ENCODE measurements at regions of chr2 and their contacts with region 1.

Region 1: GRCh38 chr2:69643602-69644505 is at the start of gene AAK1:
- DNase-seq: peak; percentile 90
- H3K4me3 Mint-ChIP-seq: peak within 1 kb of the TSS; percentile 81
- H3K27ac Mint-ChIP-seq: peak within 1 kb of the TSS; percentile 98
- H3K4me1 Mint-ChIP-seq: peaks cover 47% of the 10 kb centered on the region
- H3K27me3 Mint-ChIP-seq: no peaks in the 10 kb centered on the region
- total RNA-seq, gene AAK1: 77.4 to 79.5 TPM

Region 2: DNA sequence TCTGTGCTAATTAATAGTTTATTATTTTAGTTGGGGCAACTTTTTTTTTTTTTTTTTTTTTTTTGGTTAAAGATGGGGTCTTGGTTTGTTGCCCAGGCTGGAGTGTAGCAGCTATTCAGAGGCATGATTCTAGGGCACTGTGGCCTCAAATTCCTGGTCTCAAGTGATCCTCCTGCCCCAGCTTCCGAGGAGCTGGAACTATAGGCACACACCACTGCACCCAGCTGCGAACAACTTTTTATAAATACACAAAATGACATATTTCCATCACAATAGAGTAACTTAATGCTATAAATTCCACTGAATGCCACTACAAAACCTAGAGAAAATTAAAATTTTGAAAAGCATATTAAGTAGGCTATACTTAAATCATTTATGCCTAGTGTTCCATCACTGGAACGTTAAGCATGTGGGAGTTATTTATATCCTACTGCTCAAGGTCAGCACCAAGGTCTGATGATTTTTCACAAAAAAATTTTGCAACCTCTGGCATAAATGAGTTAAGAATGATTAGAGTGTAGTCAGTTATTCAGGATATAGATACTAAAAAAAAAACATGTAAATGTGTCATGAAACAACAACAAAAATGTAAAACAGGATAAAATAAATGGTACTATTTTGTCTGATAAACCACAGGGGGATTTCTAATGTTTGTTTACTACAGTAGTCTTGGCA is 303.6 kb before region 1 on chr2:
- CTCF ChIA-PET with region 1: no interaction called
- intact Hi-C with region 1: no loop called
- DNase-seq: no peak
- H3K4me3 Mint-ChIP-seq: no peak overlapping the region
- H3K27ac Mint-ChIP-seq: no peak overlapping the region
- H3K4me1 Mint-ChIP-seq: peaks cover 9% of the 10 kb centered on the region
- H3K27me3 Mint-ChIP-seq: no peaks in the 10 kb centered on the region

Region 3: GRCh38 chr2:69386789-69387734 is 256.8 kb before region 1 on chr2 and contains the start of gene GFPT1:
- CTCF ChIA-PET with region 1: no interaction called
- intact Hi-C with region 1: loop called (anchors 5 kb)
- DNase-seq: peak; percentile 93
- H3K4me3 Mint-ChIP-seq: peak within 1 kb of the TSS; percentile 93
- H3K27ac Mint-ChIP-seq: peak within 1 kb of the TSS; percentile 83
- H3K4me1 Mint-ChIP-seq: peaks cover 42% of the 10 kb centered on the region
- H3K27me3 Mint-ChIP-seq: no peaks in the 10 kb centered on the region
- total RNA-seq, gene GFPT1: 34.6 to 36.0 TPM

Region 4: GRCh38 chr2:69565431-69565839 is 78.4 kb before region 1 on chr2:
- CTCF ChIA-PET with region 1: interaction called, 27 read pairs
- intact Hi-C with region 1: no loop called
- DNase-seq: peak; percentile 82
- H3K4me3 Mint-ChIP-seq: no peak overlapping the region
- H3K27ac Mint-ChIP-seq: peak overlapping the region; percentile 41
- H3K4me1 Mint-ChIP-seq: peaks cover 87% of the 10 kb centered on the region
- H3K27me3 Mint-ChIP-seq: no peaks in the 10 kb centered on the region

Region 5: GRCh38 chr2:69625078-69625795 is 18.6 kb before region 1 on chr2:
- CTCF ChIA-PET with region 1: interaction called, 21 read pairs
- intact Hi-C with region 1: loop called (anchors 1 kb)
- DNase-seq: peak; percentile 45
- H3K4me3 Mint-ChIP-seq: no peak overlapping the region
- H3K27ac Mint-ChIP-seq: no peak overlapping the region
- H3K4me1 Mint-ChIP-seq: peaks cover 17% of the 10 kb centered on the region
- H3K27me3 Mint-ChIP-seq: no peaks in the 10 kb centered on the region

Region 6: DNA sequence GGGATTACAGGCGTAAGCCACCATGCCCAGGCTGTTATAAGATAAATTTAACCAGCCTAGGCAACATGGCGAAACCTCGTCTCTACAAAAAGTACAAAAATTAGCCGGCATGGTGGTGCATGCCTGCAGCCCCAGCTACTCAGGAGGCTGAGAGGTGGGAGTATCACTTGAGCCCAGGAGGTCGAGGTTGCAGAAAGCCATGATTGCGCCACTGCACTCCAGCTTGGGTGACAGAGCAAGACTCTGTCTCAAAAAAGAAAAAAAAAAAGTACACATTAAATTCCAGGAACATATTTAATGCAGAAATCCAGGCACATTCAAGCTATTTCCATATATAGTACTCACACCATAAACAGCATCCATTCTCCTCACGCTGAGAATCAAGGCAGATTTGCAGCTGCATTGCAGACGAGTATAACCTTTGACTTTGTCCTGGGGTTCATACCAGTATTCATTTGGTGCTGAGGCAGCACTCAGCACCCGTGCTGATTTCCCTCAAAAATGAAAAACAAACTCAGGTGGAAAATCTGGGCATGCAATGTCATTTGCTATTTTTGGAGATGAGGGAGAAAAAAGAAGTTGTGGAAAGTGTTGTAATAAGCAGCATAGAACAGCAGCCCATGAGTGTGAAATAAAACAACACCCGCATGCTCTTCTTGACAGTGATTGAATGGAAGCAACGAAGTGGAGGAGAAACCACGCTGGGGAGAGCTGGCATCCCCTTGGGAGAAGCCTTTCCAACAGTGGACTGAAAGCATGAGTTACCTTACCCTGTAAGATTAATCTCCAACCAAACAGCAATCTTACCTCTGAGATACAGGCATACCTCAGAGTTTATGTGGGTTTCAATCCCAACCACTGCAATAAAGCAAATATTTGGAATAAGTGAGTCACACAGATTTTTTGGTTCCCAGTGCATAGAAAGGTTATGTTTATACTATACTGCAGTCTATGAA is 51.3 kb after region 1 on chr2:
- CTCF ChIA-PET with region 1: interaction called, 12 read pairs
- intact Hi-C with region 1: loop called (anchors 1 kb)
- DNase-seq: no peak
- H3K4me3 Mint-ChIP-seq: peak overlapping the region; percentile 22
- H3K27ac Mint-ChIP-seq: peak overlapping the region; percentile 18
- H3K4me1 Mint-ChIP-seq: peaks cover 83% of the 10 kb centered on the region
- H3K27me3 Mint-ChIP-seq: no peaks in the 10 kb centered on the region

Region 7: GRCh38 chr2:69815717-69816116 is 171.9 kb after region 1 on chr2:
- CTCF ChIA-PET with region 1: no interaction called
- intact Hi-C with region 1: no loop called
- DNase-seq: no peak
- H3K4me3 Mint-ChIP-seq: no peak overlapping the region
- H3K27ac Mint-ChIP-seq: no peak overlapping the region
- H3K4me1 Mint-ChIP-seq: peaks cover 2% of the 10 kb centered on the region
- H3K27me3 Mint-ChIP-seq: no peaks in the 10 kb centered on the region

Region 8: DNA sequence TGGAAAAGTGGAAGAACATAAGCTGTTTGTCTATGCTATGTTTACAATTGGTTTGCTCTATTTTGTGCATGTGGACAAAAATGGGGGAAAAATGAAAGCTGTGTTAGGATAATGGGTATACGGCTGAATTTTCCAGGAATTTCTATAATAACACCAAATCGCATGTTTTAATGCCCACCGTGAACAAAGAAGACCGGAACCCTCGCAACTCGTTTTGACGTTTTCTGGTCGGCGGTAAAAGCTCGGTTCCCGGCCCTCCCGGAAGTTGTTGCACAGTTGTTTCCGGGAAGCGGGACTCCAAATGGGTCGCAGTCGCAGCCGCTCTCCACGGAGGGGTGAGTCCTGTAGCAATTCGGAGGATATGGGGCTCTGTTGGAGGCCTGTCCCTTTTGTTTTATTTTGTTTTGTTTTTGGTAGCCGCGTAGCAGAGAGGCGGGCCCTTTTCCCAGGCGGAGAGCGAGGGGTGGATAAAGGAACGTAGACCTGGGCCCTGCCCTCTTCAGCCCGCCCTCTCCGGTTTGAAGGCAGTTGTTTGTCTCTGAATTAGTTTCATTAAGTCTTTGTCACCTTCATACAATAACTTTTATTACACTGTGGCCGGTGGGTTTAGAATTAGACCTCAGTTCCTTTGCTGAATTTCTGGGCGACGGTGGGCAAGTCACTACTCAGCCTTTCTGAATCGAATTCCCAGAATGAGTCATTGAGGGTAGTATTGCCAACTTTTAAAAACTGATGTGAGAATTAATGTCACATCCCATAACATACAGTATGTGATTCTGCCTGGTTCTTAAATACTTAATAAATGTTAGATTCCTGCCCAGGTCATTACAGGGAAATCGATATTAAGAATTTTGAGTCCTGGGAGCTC is 250.1 kb after region 1 on chr2 and contains the start of gene SNRNP27:
- CTCF ChIA-PET with region 1: no interaction called
- intact Hi-C with region 1: loop called (anchors 5 kb)
- DNase-seq: peak; percentile 91
- H3K4me3 Mint-ChIP-seq: peak within 1 kb of the TSS; percentile 98
- H3K27ac Mint-ChIP-seq: peak within 1 kb of the TSS; percentile 97
- H3K4me1 Mint-ChIP-seq: peaks cover 41% of the 10 kb centered on the region
- H3K27me3 Mint-ChIP-seq: no peaks in the 10 kb centered on the region
- total RNA-seq, gene SNRNP27: 56.7 to 64.6 TPM

Region 9: DNA sequence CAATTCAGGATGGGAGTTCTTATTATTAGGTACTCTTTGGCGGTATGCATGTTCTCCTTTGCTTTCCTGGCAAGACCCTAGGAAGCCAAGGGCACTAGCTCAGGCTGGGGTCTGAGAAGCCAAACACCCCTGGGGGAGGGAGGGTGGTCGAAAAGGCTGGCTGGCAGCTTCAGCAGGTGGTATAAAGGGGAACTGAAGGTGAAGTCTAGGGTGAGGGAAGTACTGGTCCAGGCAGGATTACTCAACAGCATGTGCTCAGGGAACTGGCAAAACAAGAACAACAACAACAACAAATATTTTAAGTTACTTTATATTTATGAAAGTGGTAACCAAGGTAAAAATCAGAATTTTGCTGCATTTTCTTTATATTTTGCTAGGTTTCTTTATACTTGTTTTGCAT is 402.7 kb after region 1 on chr2:
- CTCF ChIA-PET with region 1: no interaction called
- intact Hi-C with region 1: no loop called
- DNase-seq: no peak
- H3K4me3 Mint-ChIP-seq: no peak overlapping the region
- H3K27ac Mint-ChIP-seq: no peak overlapping the region
- H3K4me1 Mint-ChIP-seq: peaks cover 18% of the 10 kb centered on the region
- H3K27me3 Mint-ChIP-seq: no peaks in the 10 kb centered on the region

Region 10: DNA sequence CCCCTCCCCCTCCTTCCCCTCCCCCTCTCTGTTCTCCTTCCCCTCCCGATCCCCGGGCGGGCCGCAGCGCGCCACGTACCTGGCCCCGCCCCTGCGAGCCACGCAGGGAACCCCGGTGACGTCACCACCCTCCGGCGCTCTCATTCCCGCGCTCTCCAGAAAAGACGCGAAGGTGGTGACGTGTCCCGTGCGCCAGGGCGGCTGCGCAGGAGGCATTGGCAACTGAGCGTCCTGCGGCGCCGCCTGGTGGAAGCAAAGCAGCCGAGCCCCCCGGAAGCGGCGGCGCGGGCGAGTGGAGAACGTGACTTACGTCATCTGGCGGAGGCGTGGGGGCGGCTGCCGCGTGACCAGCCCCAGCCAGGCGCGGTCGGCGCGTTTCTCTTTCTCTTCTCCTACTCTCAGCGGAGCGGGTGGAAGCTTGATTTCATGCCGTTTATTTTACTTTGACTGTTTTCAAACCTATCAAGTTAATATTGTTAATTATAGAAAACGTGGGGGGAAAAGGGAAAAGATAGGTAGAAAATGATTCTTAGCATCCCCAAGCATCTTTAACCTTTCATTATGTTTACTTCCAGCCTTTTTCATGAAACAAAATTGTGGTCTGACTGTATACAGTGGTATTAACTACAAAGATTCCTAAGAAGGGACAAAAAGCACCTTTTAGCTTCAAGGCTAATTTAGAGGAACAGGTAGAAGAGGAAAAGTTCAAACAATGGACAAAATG is 498.9 kb after region 1 on chr2:
- CTCF ChIA-PET with region 1: no interaction called
- intact Hi-C with region 1: loop called (anchors 2 kb)
- DNase-seq: peak; percentile 100
- H3K4me3 Mint-ChIP-seq: peak overlapping the region; percentile 93
- H3K27ac Mint-ChIP-seq: peak overlapping the region; percentile 99
- H3K4me1 Mint-ChIP-seq: peaks cover 53% of the 10 kb centered on the region
- H3K27me3 Mint-ChIP-seq: no peaks in the 10 kb centered on the region

Measured in activated naive CD4-positive, alpha-beta T cell treated with anti-CD3 and anti-CD28 coated beads for 36 hours (primary cell).